Esophagus muscularis mucosa (tissue), 4 donors: ENCODE measurements at regions of chr1 and their contacts with region 1.

Region 1: DNA sequence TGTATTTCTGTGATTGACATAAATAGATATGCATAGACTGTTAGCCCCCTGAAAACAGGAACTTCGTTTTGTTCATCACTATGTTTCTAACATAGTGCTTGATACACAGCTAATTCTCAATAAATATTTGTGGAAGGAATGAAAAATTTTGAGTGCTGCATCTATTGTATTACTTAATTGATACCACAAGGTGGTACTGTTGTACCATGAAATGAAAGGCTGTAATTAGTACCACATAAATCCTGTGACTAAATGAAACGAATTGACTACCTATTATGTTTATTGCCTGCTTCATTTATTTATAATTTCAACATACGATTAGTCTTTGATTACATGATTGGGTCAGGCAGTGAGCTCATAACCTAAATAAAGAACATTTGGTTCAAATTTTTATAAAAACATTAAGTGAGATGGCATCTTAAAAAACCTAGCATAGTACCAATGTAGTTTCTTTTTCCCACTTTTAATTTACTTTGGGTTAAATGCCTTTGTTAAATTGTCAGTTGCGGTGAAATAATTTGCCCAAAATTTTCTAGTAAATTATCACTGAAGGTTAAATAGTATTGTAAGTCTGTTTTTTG is 15.0 kb upstream of the TGFB2 start:
- DNase-seq: no peak
- H3K4me3 ChIP-seq: no peak overlapping the region
- H3K27ac ChIP-seq: no peak overlapping the region
- H3K4me1 ChIP-seq: no peaks in the 10 kb centered on the region
- H3K27me3 ChIP-seq: no peaks in the 10 kb centered on the region
- CTCF ChIP-seq: peak; percentile 64 to 70 (median 70)
- EP300 ChIP-seq: no peak
- POLR2A ChIP-seq: no peak

Region 2: DNA sequence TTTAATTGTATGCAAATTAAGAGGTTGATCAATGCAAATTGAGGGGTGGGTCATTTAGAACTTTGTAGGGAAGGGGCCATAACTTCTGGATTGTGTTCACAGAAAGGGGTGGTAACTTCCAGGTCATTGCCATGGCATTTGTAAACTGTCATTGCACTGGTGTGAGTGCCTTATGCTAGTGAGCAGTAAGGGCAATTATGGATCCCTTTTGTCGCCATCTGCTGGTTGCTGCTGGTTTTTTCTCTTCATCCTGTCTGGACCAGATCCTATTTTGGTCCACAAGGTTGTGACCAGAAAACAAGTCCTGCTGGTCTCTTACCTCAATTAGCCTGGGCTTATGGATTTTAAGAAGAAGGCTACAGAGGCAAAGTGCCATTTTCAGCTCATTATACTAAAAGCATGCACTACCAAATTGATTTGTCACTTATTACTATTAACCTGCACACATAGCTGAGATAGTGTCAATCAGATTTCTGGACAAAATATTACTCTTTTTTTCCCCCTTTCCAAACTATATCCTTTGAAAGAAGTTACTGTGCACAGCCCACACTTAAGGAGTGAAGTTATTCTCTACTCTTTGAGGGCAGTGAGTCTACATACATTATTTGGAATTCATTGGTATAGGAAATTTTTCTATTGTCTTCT is 1086.6 kb after region 1 on chr1:
- intact Hi-C with region 1: loop called (anchors 10 kb)
- DNase-seq: no peak
- H3K4me3 ChIP-seq: no peak overlapping the region
- H3K27ac ChIP-seq: no peak overlapping the region
- H3K4me1 ChIP-seq: peaks cover 0 to 10% (median 2%) of the 10 kb centered on the region in 4 donors
- H3K27me3 ChIP-seq: no peaks in the 10 kb centered on the region
- CTCF ChIP-seq: peak; percentile 47 to 64 (median 50)
- EP300 ChIP-seq: no peak
- POLR2A ChIP-seq: no peak

Region 3: DNA sequence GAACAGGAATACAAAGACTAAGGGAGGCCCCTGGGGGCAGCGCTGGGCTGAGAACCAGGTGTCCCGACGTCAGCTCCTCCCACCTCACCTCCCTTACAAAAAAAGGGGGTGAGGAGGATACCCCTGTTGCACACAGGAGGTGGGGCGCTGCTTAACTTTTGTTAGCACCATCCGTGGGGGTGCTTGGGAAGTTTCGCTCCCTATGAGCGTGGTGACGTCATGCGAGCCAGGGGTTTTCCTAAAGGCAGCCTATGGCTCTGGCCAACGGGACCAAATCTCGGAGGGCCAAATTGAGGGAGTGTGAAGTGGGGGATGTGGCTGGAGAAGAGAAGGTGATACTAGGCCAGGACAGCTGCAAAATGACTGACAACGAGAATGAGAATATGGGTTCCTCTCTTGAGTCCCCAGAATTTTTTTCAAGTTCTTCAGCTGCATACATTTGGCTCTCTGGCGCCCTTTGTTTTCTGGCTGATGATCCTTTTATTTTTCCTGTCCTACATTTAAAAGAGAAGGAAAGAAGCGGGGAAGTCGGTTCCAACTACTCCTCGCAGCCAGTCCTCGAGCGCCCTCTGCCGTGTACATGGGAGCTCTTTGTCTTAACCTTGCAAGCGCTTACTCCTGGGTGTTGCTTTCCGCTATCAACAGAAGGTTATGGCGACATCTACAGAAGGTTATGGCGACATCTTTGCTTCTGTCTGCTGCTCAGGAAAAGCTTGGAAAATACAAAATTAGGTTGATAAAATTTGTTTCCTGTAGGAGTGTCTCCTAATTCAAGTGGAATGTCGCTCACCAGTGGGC is 1330.7 kb after region 1 on chr1:
- intact Hi-C with region 1: loop called (anchors 5 kb)
- DNase-seq: peak; percentile 96
- H3K4me3 ChIP-seq: peak overlapping the region; percentile 11 to 32 (median 23)
- H3K27ac ChIP-seq: peak overlapping the region in 2 of 4 donors; percentile 27 to 38
- H3K4me1 ChIP-seq: peaks cover 9 to 17% (median 10%) of the 10 kb centered on the region in 4 donors
- H3K27me3 ChIP-seq: no peaks in the 10 kb centered on the region
- CTCF ChIP-seq: peak; percentile 61 to 76 (median 72)
- EP300 ChIP-seq: no peak
- POLR2A ChIP-seq: no peak

Region 4: DNA sequence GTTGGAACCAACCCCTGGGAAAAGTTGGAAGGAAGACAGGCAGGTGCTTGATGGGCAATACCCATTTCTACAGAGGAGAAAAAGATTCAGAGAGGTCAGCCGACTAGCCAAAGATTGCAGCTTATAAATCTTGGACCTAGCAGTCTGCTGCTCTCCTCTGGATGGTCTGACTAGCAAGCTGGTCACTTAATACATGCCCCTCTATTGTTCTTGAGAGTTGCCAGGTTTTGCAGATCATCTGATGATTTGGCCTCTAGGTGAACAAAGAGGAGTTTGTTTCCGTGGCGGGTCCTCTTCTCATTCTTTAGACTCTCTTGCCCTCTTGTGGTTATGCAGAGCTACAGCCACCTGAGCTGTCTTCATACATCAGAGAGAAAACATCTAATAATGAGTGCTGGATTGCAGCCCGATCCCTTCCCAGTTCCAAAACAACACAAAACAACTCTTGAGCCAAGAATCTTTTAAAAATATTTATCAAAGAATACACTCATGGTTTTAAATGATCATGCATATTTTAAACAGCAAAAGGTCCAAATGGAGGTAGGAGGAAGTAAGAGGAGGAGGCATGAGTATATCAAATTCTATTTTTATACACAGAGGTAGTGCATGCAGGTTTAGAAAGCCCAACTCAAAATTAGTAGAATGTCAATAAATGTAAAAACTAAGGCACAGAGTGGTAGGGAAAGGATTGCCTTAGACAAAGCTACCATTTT is 1482.5 kb after region 1 on chr1:
- intact Hi-C with region 1: loop called (anchors 10 kb)
- DNase-seq: no peak
- H3K4me3 ChIP-seq: no peak overlapping the region
- H3K27ac ChIP-seq: no peak overlapping the region
- H3K4me1 ChIP-seq: peaks cover 4 to 15% (median 6%) of the 10 kb centered on the region in 4 donors
- H3K27me3 ChIP-seq: peaks cover 0 to 9% (median 0%) of the 10 kb centered on the region in 4 donors
- CTCF ChIP-seq: peak; percentile 59 to 72 (median 66)
- EP300 ChIP-seq: no peak
- POLR2A ChIP-seq: no peak